GM23248 (cell line): ENCODE measurements at regions of chr3 and their contacts with region 1.

Region 1: DNA sequence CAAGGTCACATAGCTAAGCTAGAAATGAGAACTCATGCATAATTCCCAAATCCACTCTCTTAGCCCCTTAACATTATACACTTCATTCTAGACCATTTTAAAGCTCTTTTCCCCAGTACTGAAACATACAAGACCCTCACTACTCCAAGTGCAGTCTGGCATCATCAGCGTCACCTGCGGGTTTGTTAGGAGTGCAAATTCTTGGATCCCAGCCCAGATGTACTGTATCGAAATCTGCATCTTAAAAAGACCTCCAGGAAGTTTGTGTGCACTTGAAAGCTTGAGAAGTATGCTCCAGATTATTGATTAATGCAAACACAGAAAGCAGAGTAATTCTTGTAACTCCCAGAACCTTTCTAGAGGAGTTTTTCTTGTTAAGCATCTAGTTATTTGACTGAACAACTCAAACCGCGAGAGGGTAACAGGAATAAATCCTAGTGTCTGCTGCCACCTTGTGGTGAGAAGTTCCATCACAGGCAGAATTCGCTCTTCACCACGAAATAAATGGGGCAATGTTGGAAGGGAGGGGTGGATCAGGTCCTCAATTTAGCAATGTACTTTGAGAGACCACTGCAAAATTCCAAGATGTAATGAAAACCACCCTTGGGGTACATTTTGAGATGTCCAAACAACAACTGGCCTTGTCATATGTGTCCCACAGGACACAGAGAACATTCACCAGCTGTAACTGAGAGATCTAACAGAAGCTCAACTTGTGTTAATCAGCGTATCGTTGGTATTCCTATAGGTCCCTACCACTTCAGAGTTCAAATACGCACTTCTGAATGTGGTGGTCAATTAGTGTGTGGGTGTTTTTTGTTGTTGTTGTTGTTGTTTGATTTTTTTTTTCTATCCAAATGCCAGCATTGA is 583 bp upstream of the C3orf49 start:
- DNase-seq: peak; percentile 78
- H3K4me3 ChIP-seq: no peak overlapping the region
- H3K27ac ChIP-seq: no peak overlapping the region
- H3K4me1 ChIP-seq: 0 out of 2 replicates have a peak, but pooled peaks cover 2% of the 10 kb centered on the region
- H3K27me3 ChIP-seq: no peaks in the 10 kb centered on the region

Region 2: GRCh38 chr3:62622553-62623193 is 1195.8 kb before region 1 on chr3:
- in situ Hi-C with region 1: loop called (anchors 25 kb)
- DNase-seq: peak; percentile 68
- H3K4me3 ChIP-seq: no peak overlapping the region
- H3K27ac ChIP-seq: no peak overlapping the region
- H3K4me1 ChIP-seq: no peaks in the 10 kb centered on the region
- H3K27me3 ChIP-seq: no peaks in the 10 kb centered on the region